ENCODE measurements at regions of chr7 and their contacts with region 1.

Region 1: GRCh38 chr7:129468087-129468486 is 33.9 kb downstream of the STRIP2 start:
- DNase-seq: peak; percentile 75
- ATAC-seq: peak; percentile 79
- H3K4me3 ChIP-seq: no peak overlapping the region
- H3K27ac ChIP-seq: no peak overlapping the region
- H3K4me1 ChIP-seq: peaks cover 1% of the 10 kb centered on the region; the same call in 1 of the 2 replicates
- H3K27me3 ChIP-seq: no peaks in the 10 kb centered on the region
- CTCF ChIP-seq: no peak
- POLR2A ChIP-seq: no peak
- RAD21 ChIP-seq: no peak

Region 2: GRCh38 chr7:127557803-127558202 is 1910.3 kb before region 1 on chr7:
- CTCF ChIA-PET with region 1: no interaction called
- POLR2A ChIA-PET with region 1: no interaction called
- dilution Hi-C with region 1: no loop called
- in situ Hi-C with region 1: no loop called
- intact Hi-C with region 1: no loop called
- DNase-seq: no peak
- ATAC-seq: no peak
- H3K4me3 ChIP-seq: no peak overlapping the region
- H3K27ac ChIP-seq: no peak overlapping the region
- H3K4me1 ChIP-seq: no peaks in the 10 kb centered on the region
- H3K27me3 ChIP-seq: no peaks in the 10 kb centered on the region
- CTCF ChIP-seq: 0 out of 2 replicates have a peak, but pooled peaks have one; percentile 23
- POLR2A ChIP-seq: no peak
- RAD21 ChIP-seq: peak; percentile 29; the same call in 1 of the 2 replicates

Region 3: GRCh38 chr7:129163875-129164544 is 304.1 kb before region 1 on chr7:
- CTCF ChIA-PET with region 1: no interaction called
- POLR2A ChIA-PET with region 1: no interaction called
- dilution Hi-C with region 1: no loop called
- in situ Hi-C with region 1: no loop called
- intact Hi-C with region 1: loop called (anchors 1 kb)
- DNase-seq: peak; percentile 76
- ATAC-seq: peak; percentile 81
- H3K4me3 ChIP-seq: no peak overlapping the region
- H3K27ac ChIP-seq: no peak overlapping the region
- H3K4me1 ChIP-seq: no peaks in the 10 kb centered on the region
- H3K27me3 ChIP-seq: peaks cover 61% of the 10 kb centered on the region
- CTCF ChIP-seq: peak; percentile 88
- POLR2A ChIP-seq: no peak
- RAD21 ChIP-seq: peak; percentile 67

Region 4: GRCh38 chr7:129635300-129636029 is 167.4 kb after region 1 on chr7:
- CTCF ChIA-PET with region 1: no interaction called
- POLR2A ChIA-PET with region 1: no interaction called
- dilution Hi-C with region 1: no loop called
- in situ Hi-C with region 1: no loop called
- intact Hi-C with region 1: loop called (anchors 2 kb)
- DNase-seq: peak; percentile 86
- ATAC-seq: peak; percentile 97
- H3K4me3 ChIP-seq: no peak overlapping the region
- H3K27ac ChIP-seq: no peak overlapping the region
- H3K4me1 ChIP-seq: no peaks in the 10 kb centered on the region; the same call in 1 of the 2 replicates
- H3K27me3 ChIP-seq: no peaks in the 10 kb centered on the region
- CTCF ChIP-seq: peak; percentile 92
- POLR2A ChIP-seq: no peak
- RAD21 ChIP-seq: peak; percentile 88

Measured in IMR-90 (cell line).